ENCODE measurements at regions of chr1 and their contacts with region 1.

Region 1: GRCh38 chr1:156860113-156860627 is 495 bp upstream of the NTRK1 start:
- DNase-seq: peak; percentile 66
- H3K4me3 Mint-ChIP-seq: peak overlapping the region; percentile 68
- H3K27ac Mint-ChIP-seq: no peak overlapping the region
- H3K4me1 Mint-ChIP-seq: peaks cover 44% of the 10 kb centered on the region
- H3K27me3 Mint-ChIP-seq: peaks cover 54% of the 10 kb centered on the region

Region 2: GRCh38 chr1:156705918-156706656 is 154.1 kb before region 1 on chr1:
- CTCF ChIA-PET with region 1: interaction called, 12 read pairs
- POLR2A ChIA-PET with region 1: no interaction called
- intact Hi-C with region 1: no loop called
- DNase-seq: peak; percentile 82
- H3K4me3 Mint-ChIP-seq: peak overlapping the region; percentile 75
- H3K27ac Mint-ChIP-seq: no peak overlapping the region
- H3K4me1 Mint-ChIP-seq: peaks cover 28% of the 10 kb centered on the region
- H3K27me3 Mint-ChIP-seq: peaks cover 24% of the 10 kb centered on the region

Region 3: GRCh38 chr1:156813750-156814570 is 46.2 kb before region 1 on chr1:
- CTCF ChIA-PET with region 1: interaction called, 80 read pairs
- POLR2A ChIA-PET with region 1: interaction called, 14 read pairs
- intact Hi-C with region 1: loop called (anchors 5 kb)
- DNase-seq: peak; percentile 81
- H3K4me3 Mint-ChIP-seq: peak overlapping the region; percentile 96
- H3K27ac Mint-ChIP-seq: peak overlapping the region; percentile 99
- H3K4me1 Mint-ChIP-seq: peaks cover 59% of the 10 kb centered on the region
- H3K27me3 Mint-ChIP-seq: no peaks in the 10 kb centered on the region

Region 4: GRCh38 chr1:156838981-156839410 is 21.2 kb before region 1 on chr1:
- CTCF ChIA-PET with region 1: interaction called, 147 read pairs
- POLR2A ChIA-PET with region 1: interaction called, 7 read pairs
- intact Hi-C with region 1: loop called (anchors 2 kb)
- DNase-seq: peak; percentile 59
- H3K4me3 Mint-ChIP-seq: no peak overlapping the region
- H3K27ac Mint-ChIP-seq: no peak overlapping the region
- H3K4me1 Mint-ChIP-seq: peaks cover 42% of the 10 kb centered on the region
- H3K27me3 Mint-ChIP-seq: peaks cover 51% of the 10 kb centered on the region

Region 5: GRCh38 chr1:156892190-156893047 is 32.2 kb after region 1 on chr1:
- CTCF ChIA-PET with region 1: interaction called, 74 read pairs
- POLR2A ChIA-PET with region 1: interaction called, 3 read pairs
- intact Hi-C with region 1: loop called (anchors 2 kb)
- DNase-seq: peak; percentile 92
- H3K4me3 Mint-ChIP-seq: peak overlapping the region; percentile 48
- H3K27ac Mint-ChIP-seq: no peak overlapping the region
- H3K4me1 Mint-ChIP-seq: peaks cover 10% of the 10 kb centered on the region
- H3K27me3 Mint-ChIP-seq: peaks cover 46% of the 10 kb centered on the region

Region 6: GRCh38 chr1:156993446-156994147 is 133.4 kb after region 1 on chr1:
- CTCF ChIA-PET with region 1: no interaction called
- POLR2A ChIA-PET with region 1: no interaction called
- intact Hi-C with region 1: no loop called
- DNase-seq: no peak
- H3K4me3 Mint-ChIP-seq: no peak overlapping the region
- H3K27ac Mint-ChIP-seq: no peak overlapping the region
- H3K4me1 Mint-ChIP-seq: no peaks in the 10 kb centered on the region
- H3K27me3 Mint-ChIP-seq: peaks cover 5% of the 10 kb centered on the region